SK-N-SH (cell line): ENCODE measurements at regions of chr6 and their contacts with region 1.

Region 1: DNA sequence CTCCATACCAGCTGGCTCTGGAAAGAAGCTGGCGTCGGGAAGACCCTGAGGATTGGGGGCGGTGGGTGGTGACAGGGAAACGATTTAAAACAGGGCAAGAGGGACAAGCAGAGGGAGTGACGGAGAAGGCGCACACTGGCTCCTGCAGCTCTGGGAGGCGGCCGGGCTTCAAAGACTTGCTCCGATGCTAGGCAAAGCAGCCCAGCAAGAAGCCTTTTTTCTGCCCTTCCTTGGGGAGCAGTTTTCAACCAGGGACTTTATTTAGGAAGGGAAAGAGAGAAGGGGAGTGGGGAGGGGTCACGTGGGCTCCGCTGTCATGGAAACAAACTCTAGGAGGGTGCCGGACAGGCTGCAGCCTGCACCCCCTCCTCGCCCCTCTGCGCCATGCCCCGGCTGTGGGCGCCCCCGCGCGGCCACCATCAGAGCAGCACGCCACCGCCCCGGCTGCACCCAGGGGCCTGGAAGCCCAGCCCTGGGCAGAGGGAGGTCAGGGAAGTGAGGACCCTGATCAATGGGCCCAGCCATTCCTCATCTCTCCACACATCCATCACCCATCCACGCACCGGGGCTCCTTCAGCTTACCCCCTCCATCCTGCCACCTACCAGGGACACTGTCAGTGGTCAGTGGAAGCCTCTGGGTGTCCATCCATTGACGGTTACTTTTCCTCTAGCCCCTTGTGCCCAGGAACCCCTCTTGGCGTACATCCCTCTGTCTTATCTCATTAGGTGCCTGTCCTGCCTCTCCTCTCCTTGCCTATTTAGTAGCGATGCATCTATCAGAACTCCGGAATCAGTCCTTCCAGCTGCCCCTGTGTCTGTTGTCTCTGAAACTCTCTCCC is 66.6 kb upstream of the CCDC167 start:
- DNase-seq: peak; percentile 94
- H3K4me3 ChIP-seq: peak overlapping the region; percentile 42 to 54
- H3K27ac ChIP-seq: peak overlapping the region in 1 of 2 experiments; percentile 91; a peak in 2 of 4 replicates
- H3K4me1 ChIP-seq: peaks cover 0 to 52% of the 10 kb centered on the region in 2 experiments; a peak in 2 of 4 replicates
- H3K27me3 ChIP-seq: peaks cover 4% of the 10 kb centered on the region
- CTCF ChIP-seq: peak; percentile 87
- EP300 ChIP-seq: no peak
- RAD21 ChIP-seq: peak; percentile 84

Region 2: GRCh38 chr6:37324131-37325033 is 241.9 kb before region 1 on chr6:
- CTCF ChIA-PET with region 1: interaction called, 14 read pairs
- POLR2A ChIA-PET with region 1: no interaction called
- DNase-seq: no peak
- H3K4me3 ChIP-seq: no peak overlapping the region
- H3K27ac ChIP-seq: peak overlapping the region in 1 of 2 experiments; percentile 65; a peak in 2 of 4 replicates
- H3K4me1 ChIP-seq: peaks cover 13 to 14% of the 10 kb centered on the region in 2 experiments; a peak in 3 of 4 replicates
- H3K27me3 ChIP-seq: no peaks in the 10 kb centered on the region
- CTCF ChIP-seq: no peak
- EP300 ChIP-seq: no peak
- RAD21 ChIP-seq: no peak

Region 3: GRCh38 chr6:37483917-37484785 is 82.2 kb before region 1 on chr6:
- CTCF ChIA-PET with region 1: interaction called, 116 read pairs
- POLR2A ChIA-PET with region 1: interaction called, 5 read pairs
- DNase-seq: peak; percentile 92
- H3K4me3 ChIP-seq: no peak overlapping the region; a peak in 1 of 4 replicates
- H3K27ac ChIP-seq: peak overlapping the region in 1 of 2 experiments; percentile 43; a peak in 2 of 4 replicates
- H3K4me1 ChIP-seq: peaks cover 0 to 29% of the 10 kb centered on the region in 2 experiments; a peak in 1 of 4 replicates
- H3K27me3 ChIP-seq: no peaks in the 10 kb centered on the region
- CTCF ChIP-seq: peak; percentile 71
- EP300 ChIP-seq: no peak
- RAD21 ChIP-seq: peak; percentile 91

Region 4: DNA sequence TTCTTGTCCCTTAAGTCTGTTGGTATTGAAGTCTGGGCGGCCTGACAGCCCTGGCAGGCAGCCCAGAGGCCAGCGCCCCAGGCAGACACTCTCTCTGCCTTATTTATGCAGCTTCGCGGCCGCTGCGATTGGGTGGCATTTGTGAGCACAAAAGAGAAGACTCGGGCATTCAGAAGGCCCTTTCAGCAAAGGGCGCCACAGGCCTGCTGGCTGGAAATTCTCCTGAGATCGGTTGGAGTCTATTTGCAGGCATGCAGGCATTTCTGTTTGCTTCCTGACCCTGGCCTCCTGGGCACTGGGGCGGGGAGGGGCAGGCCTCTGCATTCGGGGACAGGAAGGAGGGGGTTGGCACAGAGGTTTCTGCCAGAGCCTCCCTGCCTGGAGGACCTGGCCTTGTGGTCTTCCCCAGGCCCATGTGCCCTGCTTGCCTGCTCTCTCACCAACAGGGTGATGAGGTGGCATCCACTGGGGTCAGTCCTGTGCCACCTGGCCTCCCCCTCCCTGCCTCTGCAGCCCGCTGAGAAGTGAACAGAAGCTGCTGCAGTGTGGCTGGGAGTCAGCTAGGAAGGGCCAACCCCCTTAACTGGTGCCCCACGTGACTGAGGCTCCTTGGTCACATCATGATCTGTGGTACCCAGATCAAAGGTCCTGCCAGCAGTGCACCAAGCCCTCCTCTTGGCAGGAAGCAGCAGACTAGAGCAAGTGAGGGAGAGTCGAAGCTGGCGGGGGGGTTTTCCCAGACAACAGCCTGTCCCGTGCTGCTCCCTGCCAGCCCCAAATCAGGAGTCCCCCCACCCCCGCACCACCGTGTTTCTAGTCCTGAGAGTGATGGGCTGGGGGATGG is 50.0 kb before region 1 on chr6:
- CTCF ChIA-PET with region 1: interaction called, 21 read pairs
- POLR2A ChIA-PET with region 1: interaction called, 3 read pairs
- DNase-seq: peak; percentile 79
- H3K4me3 ChIP-seq: no peak overlapping the region
- H3K27ac ChIP-seq: peak overlapping the region in 1 of 2 experiments; percentile 98; a peak in 2 of 4 replicates
- H3K4me1 ChIP-seq: peaks cover 5 to 54% of the 10 kb centered on the region in 2 experiments; a peak in 2 of 4 replicates
- H3K27me3 ChIP-seq: no peaks in the 10 kb centered on the region
- CTCF ChIP-seq: no peak
- EP300 ChIP-seq: no peak; a peak in 1 of 4 replicates
- RAD21 ChIP-seq: peak; percentile 7; the same call in 1 of the 2 replicates

Region 5: DNA sequence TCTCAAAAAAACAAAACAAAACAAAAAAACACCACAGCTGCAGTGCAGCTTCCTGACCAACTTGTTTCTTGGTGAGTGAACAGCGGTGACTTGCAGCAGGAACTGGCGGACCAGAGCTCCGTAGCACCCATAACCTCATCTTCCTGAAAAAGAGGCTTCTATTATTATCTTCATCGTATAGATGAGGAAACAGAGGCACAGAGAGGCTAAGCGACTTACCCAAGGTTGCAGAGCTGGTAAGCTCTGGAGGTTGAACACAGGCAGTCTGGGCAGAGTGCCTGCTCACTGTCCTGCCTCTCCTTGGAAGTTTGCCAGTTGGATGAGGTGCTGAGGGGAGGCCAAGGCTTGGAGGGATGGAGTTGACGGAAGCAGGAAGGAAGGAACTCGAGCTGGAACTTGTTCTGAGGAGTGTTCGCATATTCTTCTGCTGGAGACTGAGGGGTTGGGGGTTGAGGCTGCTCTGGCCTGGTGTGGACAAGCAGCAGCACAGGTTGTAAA is 18.7 kb before region 1 on chr6:
- CTCF ChIA-PET with region 1: interaction called, 22 read pairs
- POLR2A ChIA-PET with region 1: no interaction called
- DNase-seq: peak; percentile 45
- H3K4me3 ChIP-seq: no peak overlapping the region
- H3K27ac ChIP-seq: no peak overlapping the region
- H3K4me1 ChIP-seq: peaks cover 0 to 16% of the 10 kb centered on the region in 2 experiments; a peak in 1 of 4 replicates
- H3K27me3 ChIP-seq: no peaks in the 10 kb centered on the region
- CTCF ChIP-seq: no peak
- EP300 ChIP-seq: no peak
- RAD21 ChIP-seq: no peak

Region 6: GRCh38 chr6:37582306-37582705 is 16.0 kb after region 1 on chr6:
- CTCF ChIA-PET with region 1: interaction called, 25 read pairs
- POLR2A ChIA-PET with region 1: interaction called, 3 read pairs
- DNase-seq: no peak
- H3K4me3 ChIP-seq: no peak overlapping the region
- H3K27ac ChIP-seq: no peak overlapping the region
- H3K4me1 ChIP-seq: no peaks in the 10 kb centered on the region; a peak in 1 of 4 replicates
- H3K27me3 ChIP-seq: no peaks in the 10 kb centered on the region
- CTCF ChIP-seq: no peak
- EP300 ChIP-seq: no peak
- RAD21 ChIP-seq: no peak

Region 7: DNA sequence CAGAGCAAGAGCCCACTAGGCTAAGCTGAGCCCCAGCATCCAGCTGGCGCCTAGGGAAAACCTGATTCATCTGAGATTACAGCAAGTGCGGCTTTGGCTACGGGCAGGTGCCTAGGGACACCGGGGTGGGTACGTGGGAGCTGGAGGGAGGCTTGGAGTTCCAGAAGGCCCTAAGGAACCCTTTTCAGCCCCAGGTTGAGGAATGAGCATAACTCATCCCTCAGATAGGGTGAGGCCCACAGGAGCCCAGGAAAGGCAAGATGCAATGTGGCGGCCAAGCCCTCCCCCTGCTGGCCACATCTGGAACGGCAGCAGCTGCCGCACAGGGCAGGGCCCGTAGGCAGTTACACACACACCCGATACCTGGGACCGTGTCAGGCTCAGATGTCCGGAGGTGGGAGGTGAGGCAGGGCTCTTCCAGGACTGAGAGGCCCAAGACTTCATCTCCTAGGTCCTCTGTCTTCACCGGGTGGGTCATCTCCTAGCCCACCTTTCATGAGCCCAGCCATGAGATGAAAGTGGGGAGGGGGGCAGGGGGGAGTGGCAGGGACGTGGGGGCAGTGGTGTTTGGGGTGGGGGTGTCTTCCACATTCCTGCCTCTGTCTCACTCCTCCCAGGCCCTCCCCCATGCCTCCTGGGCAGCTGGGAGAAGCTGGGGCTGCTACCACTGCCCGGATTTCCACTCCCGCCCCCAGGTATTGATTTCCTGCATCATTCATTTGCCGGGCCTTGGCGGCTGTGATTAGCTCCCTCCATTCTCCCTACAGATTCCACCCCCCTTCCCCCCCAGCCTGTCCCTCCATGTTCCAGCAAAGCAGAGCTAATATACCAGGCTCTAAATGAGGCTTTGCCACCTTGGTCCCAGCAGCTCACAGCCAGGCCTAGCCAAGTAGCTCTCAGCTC is 125.8 kb after region 1 on chr6:
- CTCF ChIA-PET with region 1: interaction called, 68 read pairs
- POLR2A ChIA-PET with region 1: no interaction called
- DNase-seq: peak; percentile 90
- H3K4me3 ChIP-seq: no peak overlapping the region; a peak in 1 of 4 replicates
- H3K27ac ChIP-seq: peak overlapping the region in 1 of 2 experiments; percentile 20; a peak in 1 of 4 replicates
- H3K4me1 ChIP-seq: peaks cover 4 to 25% of the 10 kb centered on the region in 2 experiments; a peak in 3 of 4 replicates
- H3K27me3 ChIP-seq: no peaks in the 10 kb centered on the region
- CTCF ChIP-seq: peak; percentile 96
- EP300 ChIP-seq: no peak
- RAD21 ChIP-seq: peak; percentile 99